Activated CD8-positive, alpha-beta memory T cell treated with anti-CD3 and anti-CD28 coated beads, Interleukin-2, amount 10 ng/mL, durations not matched to agents 7 days and 5 days (primary cell): ENCODE measurements at regions of chr2 and their contacts with region 1.

Region 1: DNA sequence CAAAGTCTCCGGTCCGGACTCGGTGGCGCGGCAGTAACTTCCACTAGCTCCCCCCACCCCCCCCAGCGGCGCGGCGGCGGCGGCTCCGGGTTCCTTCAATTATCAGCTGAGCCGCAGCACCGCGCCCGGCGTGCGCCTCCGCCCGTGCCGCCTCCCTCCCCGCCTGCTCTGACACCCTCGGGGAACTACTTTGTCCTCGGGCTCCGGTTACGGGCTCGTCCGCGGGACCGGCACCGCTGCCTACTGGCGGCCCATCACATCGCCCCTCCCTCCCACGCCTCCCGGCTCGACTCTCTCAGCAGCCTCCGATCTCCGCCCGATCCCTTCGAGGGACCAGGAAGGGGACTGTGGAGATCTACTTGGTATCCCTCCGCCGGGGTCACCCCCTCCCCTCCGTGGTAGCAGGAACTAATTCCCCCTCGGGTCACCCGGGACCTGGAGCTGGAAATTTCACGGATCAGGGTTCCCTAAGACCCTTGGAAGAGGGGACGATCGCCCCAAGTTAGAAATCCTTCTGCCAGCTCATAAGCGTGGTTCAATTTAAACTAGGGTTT is at the start of gene TRIP12:
- DNase-seq: peak; percentile 92
- ATAC-seq: peak; percentile 82
- H3K4me3 Mint-ChIP-seq: peak within 1 kb of the TSS; percentile 99
- H3K27ac Mint-ChIP-seq: peak within 1 kb of the TSS; percentile 99
- H3K4me1 Mint-ChIP-seq: peaks cover 47% of the 10 kb centered on the region
- H3K27me3 Mint-ChIP-seq: no peaks in the 10 kb centered on the region
- total RNA-seq, gene TRIP12: 235 to 270 TPM

Region 2: DNA sequence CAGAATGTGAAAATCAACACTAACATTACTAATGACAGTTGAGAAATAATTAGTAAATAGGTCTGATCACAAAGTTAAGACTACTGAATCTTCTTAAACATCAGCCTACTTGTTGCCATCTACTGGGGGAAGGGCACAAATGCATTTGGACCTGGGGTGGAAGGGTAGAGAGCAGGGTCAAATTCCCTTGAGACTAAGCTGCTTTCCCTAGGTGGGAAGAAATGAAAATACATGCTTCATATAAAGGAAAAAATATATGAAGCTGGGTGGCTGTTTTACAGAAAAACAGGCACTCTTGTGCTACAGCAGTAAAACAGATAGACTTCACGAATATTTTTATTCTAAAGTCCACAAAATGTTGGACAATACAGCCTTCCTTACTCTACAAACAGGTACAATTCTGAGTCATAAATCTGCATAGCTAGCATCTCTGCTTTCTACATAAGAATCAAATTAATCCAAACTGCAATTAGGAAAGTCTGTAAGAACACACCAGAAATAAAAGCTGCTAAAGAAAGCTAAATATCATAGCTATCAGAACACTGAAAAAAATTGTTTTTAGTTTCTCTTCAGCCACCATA is 11.0 kb before region 1 on chr2:
- CTCF ChIA-PET with region 1: interaction called, 16 read pairs
- DNase-seq: peak; percentile 49
- ATAC-seq: peak; percentile 74
- H3K4me3 Mint-ChIP-seq: no peak overlapping the region
- H3K27ac Mint-ChIP-seq: peak overlapping the region; percentile 65
- H3K4me1 Mint-ChIP-seq: peaks cover 40% of the 10 kb centered on the region
- H3K27me3 Mint-ChIP-seq: no peaks in the 10 kb centered on the region